Sciatic nerve (tissue), 2 donors: ENCODE measurements at regions of chr6 and their contacts with region 1.

Region 1: GRCh38 chr6:33014841-33015634 is 5.6 kb upstream of the HLA-DOA start:
- DNase-seq: no peak
- ATAC-seq: peak; percentile 68

Region 2: GRCh38 chr6:32971581-32972352 is 43.3 kb before region 1 on chr6:
- intact Hi-C with region 1: no loop called
- DNase-seq: peak; percentile 100
- ATAC-seq: peak; percentile 79

Region 3: GRCh38 chr6:33082702-33083101 is 67.7 kb after region 1 on chr6:
- intact Hi-C with region 1: loop called (anchors 5 kb)
- DNase-seq: no peak
- ATAC-seq: no peak

Region 4: DNA sequence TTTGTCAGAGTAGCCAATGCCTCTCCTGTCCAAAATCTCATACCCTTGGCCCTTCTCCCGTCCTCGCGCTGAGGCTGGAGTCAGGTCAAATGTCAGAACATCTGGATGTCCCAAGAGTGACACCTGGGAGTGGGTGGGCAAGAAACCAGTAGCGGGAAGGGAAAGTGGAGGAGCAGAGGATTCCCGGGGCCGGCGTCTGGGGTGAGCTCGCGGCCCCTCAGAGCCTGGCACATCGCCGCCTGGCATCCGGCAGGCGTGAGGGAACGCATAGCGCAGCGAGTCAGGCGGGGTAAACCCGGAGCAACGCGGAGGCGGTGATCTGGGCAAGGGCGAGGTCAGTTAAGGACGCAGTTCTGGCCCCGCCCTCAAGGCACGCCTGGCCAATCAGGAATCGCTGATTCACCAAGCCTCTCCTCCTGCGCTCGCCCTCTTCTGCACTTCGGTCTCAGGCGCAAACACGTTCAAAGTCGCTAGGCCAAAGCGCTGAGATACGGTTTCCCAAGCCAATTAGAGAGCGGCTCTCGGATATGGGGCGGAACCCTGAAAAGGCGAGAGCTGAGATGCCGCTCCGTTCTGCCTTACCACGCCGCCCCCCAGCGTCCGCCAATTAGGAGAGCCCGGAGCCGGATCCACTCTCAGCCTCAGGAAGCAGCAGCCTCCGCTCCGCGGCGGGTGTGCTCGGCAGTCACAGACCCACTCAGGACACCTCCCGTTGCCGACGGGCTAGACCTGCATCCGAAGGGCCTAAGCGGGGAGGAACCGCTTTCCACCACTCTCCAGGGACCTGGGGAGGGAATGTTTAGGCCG is 234.1 kb after region 1 on chr6:
- intact Hi-C with region 1: loop called (anchors 10 kb)
- DNase-seq: peak; percentile 97
- ATAC-seq: peak; percentile 97